ENCODE measurements at regions of chr17 and their contacts with region 1.

Region 1: GRCh38 chr17:82668631-82669099 is 20.4 kb upstream of the WDR45B start:
- DNase-seq: peak; percentile 57 to 86 (median 78)
- ATAC-seq: peak; percentile 83
- H3K4me3 ChIP-seq: no peak overlapping the region
- H3K27ac ChIP-seq: no peak overlapping the region
- H3K4me1 ChIP-seq: no peaks in the 10 kb centered on the region
- H3K27me3 ChIP-seq: no peaks in the 10 kb centered on the region

Region 2: GRCh38 chr17:82751571-82752370 is 83.1 kb after region 1 on chr17 and contains the start of gene TBCD:
- intact Hi-C with region 1: loop called in 1 of 4 experiments (anchors 10 kb)
- DNase-seq: peak; percentile 92 to 96 (median 96)
- ATAC-seq: peak; percentile 94 to 95
- H3K4me3 ChIP-seq: peak within 1 kb of the TSS; percentile 67
- H3K27ac ChIP-seq: peak within 1 kb of the TSS; percentile 75
- H3K4me1 ChIP-seq: peaks cover 3% of the 10 kb centered on the region
- H3K27me3 ChIP-seq: no peaks in the 10 kb centered on the region
- total RNA-seq, gene TBCD: 36.2 to 43.9 (median 41.5) TPM

Region 3: DNA sequence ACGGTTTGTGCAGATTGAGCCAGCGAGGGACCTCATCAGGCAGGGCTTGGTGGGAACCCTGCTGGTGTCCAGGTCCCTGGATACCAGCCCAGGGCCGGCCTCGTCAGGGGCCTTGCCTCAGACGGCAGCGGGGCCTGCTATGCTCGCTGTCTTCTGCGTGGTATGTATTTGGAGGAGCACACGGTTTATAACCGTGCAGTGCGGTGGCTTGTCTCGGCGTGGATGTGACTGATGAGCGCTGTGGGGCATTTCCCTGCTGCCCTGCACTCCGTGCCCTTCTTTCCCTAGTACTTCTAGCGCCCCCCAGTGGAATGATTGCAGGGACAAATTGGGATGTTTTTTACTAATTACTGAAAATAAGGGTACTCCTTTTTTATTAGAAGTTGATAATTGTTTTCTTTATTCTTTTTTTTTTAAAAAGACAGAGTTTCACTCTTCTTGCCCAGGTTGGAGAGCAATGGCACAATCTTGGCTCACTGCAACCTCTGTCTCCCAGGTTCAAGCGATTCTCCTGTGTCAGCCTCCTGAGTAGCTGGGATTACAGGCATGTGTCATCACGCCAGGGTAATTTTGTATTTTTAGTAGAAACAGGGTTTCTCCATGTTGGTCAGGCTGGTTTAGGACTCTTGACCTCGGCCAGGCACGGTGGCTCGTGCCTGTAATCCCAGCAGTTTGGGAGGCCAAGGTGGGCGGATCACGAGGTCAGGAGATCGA is 98.5 kb after region 1 on chr17:
- intact Hi-C with region 1: loop called in 2 of 4 experiments (anchors 5 to 10 kb)
- DNase-seq: no peak
- ATAC-seq: peak; percentile 56 to 68
- H3K4me3 ChIP-seq: no peak overlapping the region
- H3K27ac ChIP-seq: no peak overlapping the region
- H3K4me1 ChIP-seq: no peaks in the 10 kb centered on the region
- H3K27me3 ChIP-seq: no peaks in the 10 kb centered on the region

Region 4: DNA sequence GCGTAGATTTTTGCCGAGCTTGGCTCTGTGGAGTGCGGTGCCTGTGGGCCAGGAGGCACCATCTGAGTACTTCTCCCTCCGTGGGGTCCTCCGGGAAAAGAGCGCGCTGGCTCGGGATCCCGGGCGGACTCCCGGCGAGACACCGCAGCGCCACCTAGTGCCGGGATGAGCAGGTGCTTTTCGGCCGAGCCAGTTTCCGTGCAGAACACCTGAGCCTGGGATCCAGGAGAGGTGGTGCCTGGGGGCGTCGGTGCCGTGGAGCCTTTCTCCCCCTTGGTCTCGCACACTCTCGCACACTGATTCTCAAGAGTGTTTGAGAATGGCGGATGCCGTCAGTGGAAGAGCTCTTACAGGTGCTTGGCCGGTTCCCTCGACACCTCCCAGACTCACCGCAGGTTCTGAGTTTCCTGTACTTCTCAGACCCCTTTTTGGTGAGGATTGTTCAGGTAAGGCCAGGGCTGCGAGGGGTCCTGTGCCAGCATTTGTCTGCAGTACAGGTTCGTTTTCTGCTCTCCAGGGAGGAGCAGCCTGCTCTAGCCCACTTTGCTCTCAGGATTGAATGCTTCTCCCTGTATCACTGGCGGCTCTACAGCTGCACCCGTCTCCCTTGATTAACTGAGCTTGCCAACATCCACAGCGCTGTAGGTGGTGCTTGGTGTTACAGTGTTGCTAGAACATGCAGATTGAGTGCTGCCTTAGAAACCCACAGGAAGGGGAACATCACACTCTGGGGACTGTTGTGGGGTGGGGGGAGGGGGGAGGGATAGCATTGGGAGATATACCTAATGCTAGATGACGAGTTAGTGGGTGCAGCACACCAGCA is 106.5 kb after region 1 on chr17:
- intact Hi-C with region 1: loop called in 1 of 4 experiments (anchors 10 kb)
- DNase-seq: peak; percentile 73 to 90 (median 88)
- ATAC-seq: peak; percentile 44 to 60
- H3K4me3 ChIP-seq: no peak overlapping the region
- H3K27ac ChIP-seq: no peak overlapping the region
- H3K4me1 ChIP-seq: no peaks in the 10 kb centered on the region
- H3K27me3 ChIP-seq: no peaks in the 10 kb centered on the region

Region 5: GRCh38 chr17:82848022-82848592 is 179.4 kb after region 1 on chr17:
- intact Hi-C with region 1: no loop called
- DNase-seq: peak in 1 of 3 donors; percentile 58
- ATAC-seq: peak in 1 of 2 donors; percentile 5
- H3K4me3 ChIP-seq: no peak overlapping the region
- H3K27ac ChIP-seq: peak overlapping the region; percentile 26
- H3K4me1 ChIP-seq: peaks cover 2% of the 10 kb centered on the region
- H3K27me3 ChIP-seq: no peaks in the 10 kb centered on the region